ENCODE measurements at regions of chr15 and their contacts with region 1.

Region 1: GRCh38 chr15:85582131-85583079 is 202.0 kb downstream of the AKAP13 start:
- DNase-seq: peak; percentile 77
- H3K4me3 Mint-ChIP-seq: peak overlapping the region; percentile 71
- H3K27ac Mint-ChIP-seq: peak overlapping the region; percentile 85
- H3K4me1 Mint-ChIP-seq: peaks cover 68% of the 10 kb centered on the region
- H3K27me3 Mint-ChIP-seq: no peaks in the 10 kb centered on the region

Region 2: DNA sequence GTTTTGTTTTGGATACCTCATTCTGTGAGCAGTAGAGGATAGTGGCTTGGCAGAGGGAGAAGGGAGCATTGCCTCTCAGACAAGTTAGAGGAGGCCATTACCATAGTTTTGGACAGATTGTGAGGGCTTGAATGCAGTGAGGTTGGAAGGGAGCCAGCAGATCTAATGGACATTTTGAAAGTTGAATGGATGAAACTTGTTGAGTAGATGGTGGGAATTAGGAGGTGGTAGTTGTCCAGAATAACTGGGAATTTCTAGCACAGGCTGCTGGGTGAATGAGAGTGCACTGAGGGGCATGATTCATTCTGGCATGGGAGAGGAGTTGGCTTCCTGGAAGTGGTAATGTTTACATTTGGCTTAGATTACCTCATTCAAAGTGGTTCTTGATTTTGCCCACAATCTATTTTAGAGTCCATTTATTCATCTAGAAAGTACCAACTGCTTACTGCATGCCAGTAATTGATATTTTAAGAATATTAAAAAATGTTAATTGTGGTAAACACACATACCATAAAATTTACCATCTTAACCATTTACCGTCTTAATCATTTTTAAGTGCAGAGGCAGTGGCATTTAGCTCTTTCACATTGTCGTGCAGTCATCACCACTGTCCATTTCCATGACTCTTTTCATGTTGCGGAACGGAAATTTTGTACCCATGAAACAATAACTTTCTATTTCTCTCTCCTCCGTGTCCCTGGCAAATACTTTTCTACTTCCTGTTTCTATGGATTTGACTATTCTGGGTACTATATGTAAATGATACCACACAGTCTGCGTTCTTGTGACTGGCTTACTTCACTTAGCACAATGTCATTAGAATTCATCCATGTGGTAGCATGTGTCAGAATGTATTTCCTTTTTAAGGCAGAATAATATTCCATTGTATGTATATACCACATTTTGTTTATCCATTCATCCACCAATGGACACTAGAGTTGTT is 174.3 kb before region 1 on chr15:
- CTCF ChIA-PET with region 1: no interaction called
- intact Hi-C with region 1: loop called (anchors 1 kb)
- DNase-seq: peak; percentile 67
- H3K4me3 Mint-ChIP-seq: peak overlapping the region; percentile 58
- H3K27ac Mint-ChIP-seq: peak overlapping the region; percentile 88
- H3K4me1 Mint-ChIP-seq: peaks cover 86% of the 10 kb centered on the region
- H3K27me3 Mint-ChIP-seq: no peaks in the 10 kb centered on the region

Region 3: DNA sequence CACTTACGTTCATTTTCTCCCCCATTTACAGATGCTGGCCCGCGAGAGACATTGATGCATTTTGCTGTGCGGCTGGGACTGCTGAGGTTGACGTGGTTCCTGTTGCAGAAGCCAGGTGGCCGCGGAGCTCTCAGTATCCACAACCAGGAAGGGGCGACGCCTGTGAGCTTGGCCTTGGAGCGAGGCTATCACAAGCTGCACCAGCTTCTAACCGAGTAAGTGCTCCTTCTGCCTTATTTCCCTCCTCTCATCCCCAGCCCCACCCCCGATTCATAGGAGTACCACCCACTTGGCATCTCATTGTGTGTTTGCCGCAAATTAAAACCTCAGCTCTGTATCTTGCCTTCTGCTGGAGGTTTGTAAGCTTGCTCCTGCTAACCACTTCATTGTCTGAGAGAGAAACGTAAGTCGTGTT is 38.7 kb before region 1 on chr15:
- CTCF ChIA-PET with region 1: interaction called, 12 read pairs
- intact Hi-C with region 1: loop called (anchors 1 kb)
- DNase-seq: peak; percentile 62
- H3K4me3 Mint-ChIP-seq: peak overlapping the region; percentile 52
- H3K27ac Mint-ChIP-seq: peak overlapping the region; percentile 62
- H3K4me1 Mint-ChIP-seq: peaks cover 74% of the 10 kb centered on the region
- H3K27me3 Mint-ChIP-seq: no peaks in the 10 kb centered on the region

Region 4: GRCh38 chr15:85607842-85608241 is 25.4 kb after region 1 on chr15:
- CTCF ChIA-PET with region 1: interaction called, 6 read pairs
- intact Hi-C with region 1: loop called (anchors 1 kb)
- DNase-seq: no peak
- H3K4me3 Mint-ChIP-seq: no peak overlapping the region
- H3K27ac Mint-ChIP-seq: no peak overlapping the region
- H3K4me1 Mint-ChIP-seq: peaks cover 13% of the 10 kb centered on the region
- H3K27me3 Mint-ChIP-seq: no peaks in the 10 kb centered on the region

Region 5: GRCh38 chr15:85667491-85668424 is 85.4 kb after region 1 on chr15:
- CTCF ChIA-PET with region 1: no interaction called
- intact Hi-C with region 1: loop called (anchors 1 kb)
- DNase-seq: peak; percentile 78
- H3K4me3 Mint-ChIP-seq: no peak overlapping the region
- H3K27ac Mint-ChIP-seq: peak overlapping the region; percentile 93
- H3K4me1 Mint-ChIP-seq: peaks cover 26% of the 10 kb centered on the region
- H3K27me3 Mint-ChIP-seq: no peaks in the 10 kb centered on the region

Measured in activated naive CD4-positive, alpha-beta T cell treated with anti-CD3 and anti-CD28 coated beads for 36 hours (primary cell).